Vagina (tissue), 2 donors: ENCODE measurements at regions of chr4 and their contacts with region 1.

Region 1: DNA sequence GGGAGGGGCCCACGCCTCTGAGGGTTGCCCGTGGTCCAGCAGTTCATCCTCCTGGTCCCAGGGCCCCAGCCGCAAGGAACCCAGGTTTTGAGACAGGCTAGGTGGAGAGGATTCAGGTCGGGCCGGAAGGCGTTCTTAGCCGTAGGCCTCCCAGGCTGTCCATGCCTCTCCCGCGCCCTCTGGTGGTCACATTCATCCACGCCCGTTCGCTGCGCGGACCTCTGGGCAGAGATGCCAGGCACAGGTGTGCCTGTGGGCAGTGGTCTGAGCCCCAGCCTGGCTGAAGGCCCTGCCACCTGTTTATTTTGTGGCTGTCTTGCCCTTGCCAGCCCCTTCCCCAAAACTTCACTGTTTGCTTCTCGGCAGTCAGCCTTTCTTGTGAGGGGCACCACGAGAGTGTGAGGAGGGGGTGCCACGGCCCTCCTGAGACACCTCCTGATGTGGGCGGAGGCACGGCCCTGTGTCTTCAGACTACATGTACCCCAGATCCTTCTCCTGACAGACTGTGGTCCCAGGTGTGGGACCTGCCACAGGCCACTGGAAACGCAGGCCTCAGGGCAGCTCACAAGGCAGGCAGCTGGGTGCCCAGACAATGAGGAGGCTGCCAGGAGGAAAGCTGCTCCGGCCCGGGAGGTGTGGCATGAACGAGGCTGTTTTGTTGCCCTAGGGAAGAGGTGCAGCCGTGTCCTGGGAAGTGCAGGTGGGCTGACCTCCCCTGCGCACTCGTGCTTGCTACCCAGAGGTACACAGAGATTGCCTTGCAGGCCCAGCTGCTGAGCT is 5.0 kb downstream of the UVSSA start:
- DNase-seq: no peak
- H3K4me3 ChIP-seq: no peak overlapping the region
- H3K27ac ChIP-seq: no peak overlapping the region
- H3K4me1 ChIP-seq: peaks cover 24% of the 10 kb centered on the region
- H3K27me3 ChIP-seq: no peaks in the 10 kb centered on the region
- CTCF ChIP-seq: peak; percentile 78 to 94 (median 89)
- POLR2A ChIP-seq: no peak

Region 2: DNA sequence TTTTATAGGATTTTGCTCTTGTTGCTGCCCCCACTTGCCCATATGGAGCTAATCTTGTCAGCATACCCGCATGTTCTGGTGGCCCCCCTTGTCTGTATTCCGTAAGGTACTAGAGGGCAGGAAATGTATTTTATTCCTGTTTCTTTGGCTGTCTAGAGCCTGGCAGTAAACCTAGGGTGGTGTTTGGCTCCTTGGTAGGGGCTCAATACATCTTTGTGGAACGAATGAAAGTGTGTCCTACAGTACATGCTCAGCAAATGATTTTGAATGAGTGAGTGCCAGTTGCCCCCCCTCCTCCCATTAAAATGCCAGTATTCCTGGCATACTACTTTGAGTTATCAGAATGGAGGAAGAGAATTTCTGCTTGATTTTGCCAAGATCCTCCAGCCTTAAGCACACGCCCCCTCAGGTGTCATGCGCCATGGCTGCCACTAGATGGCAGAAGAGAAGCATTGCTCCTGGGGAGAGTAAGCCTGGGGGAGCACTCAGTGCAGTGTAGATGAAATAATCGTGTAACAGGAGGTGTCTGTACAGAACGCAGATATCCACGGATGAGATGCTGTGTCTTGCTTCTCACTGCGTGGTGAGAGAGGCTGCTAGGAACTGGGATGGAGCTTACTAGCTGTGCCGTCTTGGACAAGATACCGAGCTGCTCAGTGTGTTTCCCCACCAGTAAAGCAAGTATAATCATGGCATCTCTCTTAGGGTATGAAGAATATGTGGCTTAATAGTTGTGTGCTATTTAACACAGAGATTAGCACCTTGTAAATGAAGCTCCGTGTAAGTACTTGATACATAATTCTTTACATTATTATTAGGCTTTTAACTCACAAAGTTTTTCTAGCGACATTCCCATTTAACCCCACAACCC is 221.5 kb before region 1 on chr4:
- intact Hi-C with region 1: loop called (anchors 5 kb)
- DNase-seq: no peak
- H3K4me3 ChIP-seq: no peak overlapping the region
- H3K27ac ChIP-seq: no peak overlapping the region
- H3K4me1 ChIP-seq: peaks cover 12% of the 10 kb centered on the region
- H3K27me3 ChIP-seq: no peaks in the 10 kb centered on the region
- CTCF ChIP-seq: peak; percentile 87 to 98 (median 98)
- POLR2A ChIP-seq: no peak

Region 3: DNA sequence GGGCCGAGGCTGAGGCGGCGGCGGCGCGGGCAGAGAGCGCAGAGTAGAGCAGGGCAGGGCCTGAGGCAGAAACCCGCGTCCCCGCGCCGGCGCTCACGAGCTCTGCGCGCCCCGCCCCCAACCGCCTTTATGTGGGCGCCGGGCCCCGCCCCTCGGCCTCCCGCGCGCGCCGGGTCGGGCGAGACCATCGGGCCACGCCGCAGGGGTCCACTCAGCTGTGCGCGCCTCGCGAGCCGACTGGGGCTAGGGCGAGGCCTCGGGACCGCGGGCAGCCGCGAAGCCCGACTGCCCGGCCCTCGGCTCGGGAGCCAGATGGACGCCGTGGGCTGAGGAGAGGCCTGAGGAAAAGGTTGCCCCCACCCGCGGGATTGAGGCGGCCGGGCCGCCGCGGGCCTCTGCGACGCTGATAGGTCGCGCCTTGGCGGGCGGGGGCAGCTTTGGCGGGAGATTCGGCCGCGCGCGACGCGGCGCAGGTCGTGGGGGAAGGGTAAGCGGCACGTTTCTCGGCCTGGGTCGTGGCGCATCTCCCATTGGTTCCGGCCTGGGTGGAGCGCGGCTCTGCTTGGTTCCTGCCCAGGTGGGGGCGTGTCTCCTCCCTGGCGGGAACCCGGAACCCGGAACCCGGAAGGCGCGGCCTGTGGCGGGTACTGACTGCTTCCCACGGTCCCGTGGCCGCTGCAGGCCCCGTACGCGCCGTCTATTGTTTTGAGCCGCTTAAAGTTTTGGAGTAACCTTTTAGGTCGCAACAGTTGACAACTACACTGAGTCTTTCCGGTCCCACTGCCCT is 360.4 kb after region 1 on chr4 and contains the start of gene SLBP:
- intact Hi-C with region 1: loop called (anchors 5 kb)
- DNase-seq: peak in 1 of 2 donors; percentile 97
- H3K4me3 ChIP-seq: peak within 1 kb of the TSS; percentile 71 to 76
- H3K27ac ChIP-seq: peak within 1 kb of the TSS; percentile 97
- H3K4me1 ChIP-seq: peaks cover 57% of the 10 kb centered on the region
- H3K27me3 ChIP-seq: no peaks in the 10 kb centered on the region
- CTCF ChIP-seq: no peak
- POLR2A ChIP-seq: peak in 1 of 2 donors; percentile 87
- total RNA-seq, gene SLBP: 49.6 TPM